ENCODE measurements at regions of chr2 and their contacts with region 1.

Region 1: DNA sequence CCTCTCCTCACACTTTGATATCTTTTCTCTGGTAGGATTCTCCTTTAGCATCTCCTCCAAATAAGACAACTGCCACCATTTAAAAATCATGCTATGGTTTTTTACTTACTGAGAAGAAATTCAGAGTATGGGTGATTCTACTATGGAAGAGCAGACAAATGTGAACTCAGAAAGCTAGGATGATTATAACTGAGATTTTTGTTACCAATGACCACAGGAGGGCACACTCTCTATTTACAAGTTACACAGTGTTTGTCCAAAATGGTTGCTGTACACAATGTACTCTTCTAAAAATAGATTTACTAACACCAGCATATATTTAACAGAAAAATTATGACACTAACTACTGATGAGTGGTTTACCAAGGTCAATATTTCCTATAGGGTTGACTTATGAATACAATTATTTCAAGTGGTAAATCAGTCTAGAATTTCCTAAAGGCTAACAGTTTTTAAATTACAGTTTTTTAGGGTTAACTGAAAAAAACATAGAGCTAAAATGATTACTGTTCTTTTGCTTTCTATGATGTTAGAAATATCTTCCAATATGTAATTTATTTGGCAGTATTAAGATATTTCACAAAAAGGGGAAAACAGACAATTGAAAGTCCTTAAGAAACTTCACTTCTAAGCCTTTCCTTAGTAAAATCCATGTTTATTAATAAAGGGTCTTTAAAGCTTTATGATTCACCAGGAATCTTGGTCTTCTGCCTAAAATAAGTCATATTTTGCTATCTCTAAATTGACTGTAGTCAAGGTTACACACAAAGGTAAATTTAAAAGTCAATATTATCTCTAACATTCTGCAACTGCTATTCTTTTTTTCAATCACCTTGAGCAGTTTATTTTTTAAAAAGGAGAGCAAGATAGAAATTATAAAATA is 57.2 kb downstream of the MAP4K3 start:
- DNase-seq: peak; percentile 69
- H3K4me3 ChIP-seq: no peak overlapping the region
- H3K27ac ChIP-seq: peak overlapping the region; percentile 73
- H3K4me1 ChIP-seq: peaks cover 11% of the 10 kb centered on the region
- H3K27me3 ChIP-seq: no peaks in the 10 kb centered on the region
- CTCF ChIP-seq: peak; percentile 29 to 34
- POLR2A ChIP-seq: no peak

Region 2: DNA sequence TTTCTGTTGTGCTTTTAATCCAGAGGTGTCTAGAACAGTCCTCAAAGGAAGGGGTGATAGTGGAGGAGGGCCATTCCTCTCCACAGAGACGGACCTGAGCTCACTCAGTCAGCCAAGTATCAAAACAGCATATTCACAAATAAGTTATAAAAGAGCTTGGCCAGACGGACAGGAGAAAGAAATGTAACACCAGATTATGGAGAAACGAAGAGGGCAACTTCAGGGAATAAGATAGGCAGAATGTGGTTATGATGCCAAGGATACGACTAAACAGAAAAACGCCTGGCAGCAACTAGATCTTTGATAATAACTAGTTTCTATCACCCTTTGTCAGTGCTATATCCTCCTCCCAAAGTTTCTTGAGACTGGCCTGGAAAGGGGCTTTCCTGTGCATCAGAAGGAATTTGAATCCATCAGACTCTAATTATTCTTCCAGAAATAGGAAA is 14.7 kb after region 1 on chr2:
- CTCF ChIA-PET with region 1: interaction called, 24 read pairs
- POLR2A ChIA-PET with region 1: interaction called, 6 read pairs
- dilution Hi-C with region 1: no loop called
- intact Hi-C with region 1: no loop called
- DNase-seq: no peak
- H3K4me3 ChIP-seq: no peak overlapping the region
- H3K27ac ChIP-seq: no peak overlapping the region
- H3K4me1 ChIP-seq: no peaks in the 10 kb centered on the region
- H3K27me3 ChIP-seq: no peaks in the 10 kb centered on the region
- CTCF ChIP-seq: no peak
- POLR2A ChIP-seq: no peak

Region 3: GRCh38 chr2:39431592-39432316 is 51.9 kb after region 1 on chr2:
- CTCF ChIA-PET with region 1: interaction called, 20 read pairs
- POLR2A ChIA-PET with region 1: no interaction called
- dilution Hi-C with region 1: no loop called
- intact Hi-C with region 1: no loop called
- DNase-seq: no peak
- H3K4me3 ChIP-seq: no peak overlapping the region
- H3K27ac ChIP-seq: no peak overlapping the region
- H3K4me1 ChIP-seq: peaks cover 12% of the 10 kb centered on the region
- H3K27me3 ChIP-seq: no peaks in the 10 kb centered on the region
- CTCF ChIP-seq: no peak
- POLR2A ChIP-seq: no peak

Region 4: DNA sequence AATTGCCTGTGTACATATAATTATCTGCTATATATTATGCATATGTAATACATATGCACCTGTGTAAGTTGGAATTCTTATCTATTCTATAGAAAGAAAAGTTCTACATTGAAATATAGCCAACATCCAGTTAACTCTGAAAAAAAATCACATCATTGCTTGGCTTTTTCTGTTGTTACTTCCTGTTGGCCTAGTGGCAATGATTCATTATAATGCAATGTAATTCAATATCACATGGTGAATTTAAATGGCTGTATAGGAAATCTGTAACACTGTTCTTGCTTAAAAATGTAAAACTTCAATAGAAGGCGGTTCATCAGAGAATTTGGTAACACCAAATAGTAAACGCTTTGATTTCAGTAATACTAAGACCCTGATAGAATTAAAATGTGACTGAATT is 101.7 kb after region 1 on chr2:
- CTCF ChIA-PET with region 1: interaction called, 6 read pairs
- POLR2A ChIA-PET with region 1: no interaction called
- dilution Hi-C with region 1: no loop called
- intact Hi-C with region 1: loop called (anchors 5 kb)
- DNase-seq: peak; percentile 78
- H3K4me3 ChIP-seq: peak overlapping the region in 1 of 3 experiments; percentile 13
- H3K27ac ChIP-seq: peak overlapping the region; percentile 84
- H3K4me1 ChIP-seq: peaks cover 46% of the 10 kb centered on the region
- H3K27me3 ChIP-seq: no peaks in the 10 kb centered on the region
- CTCF ChIP-seq: no peak
- POLR2A ChIP-seq: no peak

Region 5: DNA sequence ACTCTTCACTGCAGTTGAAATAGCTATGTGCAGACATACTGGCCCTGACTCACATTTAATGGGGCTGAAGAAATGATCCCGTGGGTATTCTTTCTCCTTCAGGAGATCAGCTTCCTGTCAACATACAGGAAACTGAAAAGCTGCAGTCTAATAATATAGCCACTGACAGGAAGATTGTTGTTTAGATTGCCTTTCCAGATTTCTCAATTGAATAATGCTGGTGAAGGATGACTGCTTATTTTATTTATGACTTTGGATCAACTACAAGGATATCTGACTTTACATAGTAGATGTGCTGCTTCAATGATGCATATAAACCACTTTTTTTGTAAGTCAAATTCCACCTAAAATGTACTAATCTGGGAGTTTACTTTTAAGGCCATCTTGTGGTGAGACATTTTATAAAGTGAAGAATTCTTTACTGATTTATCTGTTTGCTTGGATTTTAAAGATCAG is 150.6 kb after region 1 on chr2:
- CTCF ChIA-PET with region 1: interaction called, 22 read pairs
- POLR2A ChIA-PET with region 1: no interaction called
- dilution Hi-C with region 1: no loop called
- intact Hi-C with region 1: no loop called
- DNase-seq: peak; percentile 77
- H3K4me3 ChIP-seq: no peak overlapping the region
- H3K27ac ChIP-seq: no peak overlapping the region
- H3K4me1 ChIP-seq: peaks cover 13% of the 10 kb centered on the region
- H3K27me3 ChIP-seq: peaks cover 0 to 3% of the 10 kb centered on the region in 2 experiments
- CTCF ChIP-seq: no peak
- POLR2A ChIP-seq: no peak

Region 6: GRCh38 chr2:39728941-39729351 is 349.1 kb after region 1 on chr2:
- CTCF ChIA-PET with region 1: interaction called, 129 read pairs
- POLR2A ChIA-PET with region 1: no interaction called
- dilution Hi-C with region 1: no loop called
- intact Hi-C with region 1: loop called (anchors 1 kb)
- DNase-seq: peak; percentile 17
- H3K4me3 ChIP-seq: no peak overlapping the region
- H3K27ac ChIP-seq: no peak overlapping the region
- H3K4me1 ChIP-seq: peaks cover 6% of the 10 kb centered on the region
- H3K27me3 ChIP-seq: peaks cover 0 to 2% of the 10 kb centered on the region in 2 experiments
- CTCF ChIP-seq: peak; percentile 77 to 88
- POLR2A ChIP-seq: no peak

Region 7: GRCh38 chr2:39875182-39875898 is 495.5 kb after region 1 on chr2:
- CTCF ChIA-PET with region 1: no interaction called
- POLR2A ChIA-PET with region 1: no interaction called
- dilution Hi-C with region 1: no loop called
- intact Hi-C with region 1: no loop called
- DNase-seq: no peak
- H3K4me3 ChIP-seq: no peak overlapping the region
- H3K27ac ChIP-seq: no peak overlapping the region
- H3K4me1 ChIP-seq: no peaks in the 10 kb centered on the region
- H3K27me3 ChIP-seq: no peaks in the 10 kb centered on the region
- CTCF ChIP-seq: no peak
- POLR2A ChIP-seq: no peak

Measured in endothelial cell of umbilical vein (primary cell).